Activated naive CD4-positive, alpha-beta T cell treated with anti-CD3 and anti-CD28 coated beads for 36 hours (primary cell): ENCODE measurements at regions of chr7 and their contacts with region 1.

Region 1: GRCh38 chr7:132430861-132431822 is 145.1 kb downstream of the PLXNA4 start:
- DNase-seq: peak; percentile 79
- H3K4me3 Mint-ChIP-seq: no peak overlapping the region
- H3K27ac Mint-ChIP-seq: peak overlapping the region; percentile 51
- H3K4me1 Mint-ChIP-seq: peaks cover 65% of the 10 kb centered on the region
- H3K27me3 Mint-ChIP-seq: no peaks in the 10 kb centered on the region

Region 2: DNA sequence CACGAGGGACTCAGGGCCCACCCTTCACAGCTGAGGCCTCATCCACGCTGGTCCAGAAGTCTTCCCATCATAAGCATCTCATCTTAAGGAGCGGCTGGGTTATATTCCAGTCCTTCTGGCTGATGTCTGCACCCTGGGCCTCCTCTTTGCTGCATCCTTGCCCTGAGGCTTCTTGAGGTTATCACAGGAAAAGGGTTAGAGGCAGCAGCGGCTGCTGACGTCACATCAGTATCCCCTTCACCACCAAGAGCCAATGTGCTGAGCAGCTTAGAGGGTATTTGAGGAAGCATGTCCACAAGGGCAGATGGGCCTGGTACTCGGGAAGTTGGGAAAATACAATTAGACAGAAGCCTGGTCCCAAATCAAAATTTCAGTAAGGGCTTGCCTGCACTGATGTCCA is 20.0 kb after region 1 on chr7:
- CTCF ChIA-PET with region 1: interaction called, 3 read pairs
- intact Hi-C with region 1: loop called (anchors 2 kb)
- DNase-seq: no peak
- H3K4me3 Mint-ChIP-seq: no peak overlapping the region
- H3K27ac Mint-ChIP-seq: no peak overlapping the region
- H3K4me1 Mint-ChIP-seq: peaks cover 46% of the 10 kb centered on the region
- H3K27me3 Mint-ChIP-seq: no peaks in the 10 kb centered on the region

Region 3: GRCh38 chr7:132464746-132465145 is 33.6 kb after region 1 on chr7:
- CTCF ChIA-PET with region 1: no interaction called
- intact Hi-C with region 1: loop called (anchors 2 kb)
- DNase-seq: no peak
- H3K4me3 Mint-ChIP-seq: no peak overlapping the region
- H3K27ac Mint-ChIP-seq: no peak overlapping the region
- H3K4me1 Mint-ChIP-seq: peaks cover 22% of the 10 kb centered on the region
- H3K27me3 Mint-ChIP-seq: no peaks in the 10 kb centered on the region

Region 4: DNA sequence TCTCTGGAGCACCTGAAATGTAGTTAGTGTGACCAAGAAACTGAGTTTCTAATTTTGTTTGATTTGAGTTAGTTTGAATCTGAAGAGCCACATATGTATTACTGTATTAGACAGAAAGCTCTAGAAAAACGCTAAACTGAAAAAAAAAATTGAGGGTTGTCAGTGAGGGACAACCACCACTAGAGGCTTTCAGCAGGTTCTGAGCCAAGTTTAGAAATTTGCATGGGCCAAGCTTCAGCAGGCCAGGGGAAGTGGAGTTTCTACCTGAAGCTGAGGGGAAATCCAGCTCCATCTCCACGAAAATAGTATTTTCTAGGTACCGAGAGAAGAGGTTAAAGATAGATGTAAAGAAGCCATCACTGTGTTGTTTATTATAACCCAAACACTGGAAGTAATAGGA is 223.0 kb after region 1 on chr7:
- CTCF ChIA-PET with region 1: interaction called, 3 read pairs
- intact Hi-C with region 1: loop called (anchors 5 kb)
- DNase-seq: peak; percentile 53
- H3K4me3 Mint-ChIP-seq: no peak overlapping the region
- H3K27ac Mint-ChIP-seq: peak overlapping the region; percentile 74
- H3K4me1 Mint-ChIP-seq: peaks cover 39% of the 10 kb centered on the region
- H3K27me3 Mint-ChIP-seq: no peaks in the 10 kb centered on the region